Heart left ventricle (tissue), 16 donors: ENCODE measurements at regions of chr22 and their contacts with region 1.

Region 1: DNA sequence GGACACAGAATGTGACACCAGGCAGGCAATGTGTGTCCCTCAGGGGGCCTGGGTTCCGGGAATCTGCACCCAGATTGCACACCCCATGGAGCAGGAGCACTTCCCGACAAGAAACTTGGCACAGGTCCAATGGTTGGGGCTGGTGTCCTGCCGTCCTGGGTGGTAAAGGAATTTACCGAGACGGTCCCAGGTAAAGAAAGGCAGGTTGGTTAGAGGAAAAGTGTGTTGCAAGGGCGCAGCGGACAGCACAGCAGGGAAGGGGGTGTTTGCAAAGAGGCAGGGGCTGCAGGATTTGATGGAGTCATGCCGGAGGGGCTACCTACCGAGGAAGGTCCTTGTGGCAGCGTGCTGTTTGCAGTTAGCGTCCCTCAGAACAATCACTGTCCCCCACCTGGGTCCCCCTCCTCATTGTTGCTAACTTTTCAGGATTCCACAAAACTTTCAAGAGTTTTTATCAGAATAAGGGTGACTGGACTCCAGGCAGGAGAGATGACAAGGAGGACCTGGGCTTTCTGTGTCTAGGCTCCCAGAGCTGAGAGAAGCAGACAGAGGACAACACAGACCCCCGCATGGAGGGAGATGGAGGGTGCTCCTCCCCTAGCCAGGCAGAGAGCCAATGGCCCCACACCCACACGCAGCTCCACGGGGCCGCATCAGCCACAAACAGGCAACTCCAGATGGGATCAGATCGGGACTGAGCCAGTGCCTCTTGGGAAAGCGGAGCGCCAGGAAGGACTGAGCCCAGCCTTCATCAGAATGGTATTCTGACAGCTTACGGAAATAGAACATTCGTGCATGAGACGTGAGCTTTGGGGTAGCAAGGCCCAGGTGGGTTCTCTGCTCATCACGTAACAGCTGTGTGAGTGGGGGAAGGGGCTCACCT is 1423.9 kb downstream of the BRD1 start:
- DNase-seq: no peak
- ATAC-seq: no peak
- H3K4me3 ChIP-seq: no peak overlapping the region
- H3K27ac ChIP-seq: no peak overlapping the region
- H3K4me1 ChIP-seq: no peaks in the 10 kb centered on the region
- H3K27me3 ChIP-seq: peaks cover 0 to 6% (median 0%) of the 10 kb centered on the region in 9 donors
- CTCF ChIP-seq: no peak
- POLR2A ChIP-seq: no peak

Region 2: GRCh38 chr22:48382197-48382596 is 21.6 kb before region 1 on chr22:
- intact Hi-C with region 1: loop called in 1 of 10 experiments (anchors 1 kb)
- DNase-seq: peak in 1 of 5 donors; percentile 8
- ATAC-seq: no peak
- H3K4me3 ChIP-seq: no peak overlapping the region
- H3K27ac ChIP-seq: no peak overlapping the region
- H3K4me1 ChIP-seq: no peaks in the 10 kb centered on the region
- H3K27me3 ChIP-seq: peaks cover 0 to 31% (median 0%) of the 10 kb centered on the region in 9 donors
- CTCF ChIP-seq: no peak
- POLR2A ChIP-seq: no peak